ENCODE measurements at regions of chrX and their contacts with region 1.

Region 1: GRCh38 chrX:68710870-68711576 is 63.6 kb downstream of the STARD8 start:
- DNase-seq: peak; percentile 51
- CTCF ChIP-seq: peak; percentile 37

Region 2: GRCh38 chrX:68196939-68197791 is 513.9 kb before region 1 on chrX:
- CTCF ChIA-PET with region 1: interaction called, 24 read pairs
- POLR2A ChIA-PET with region 1: no interaction called
- DNase-seq: peak; percentile 35
- CTCF ChIP-seq: peak; percentile 51

Region 3: DNA sequence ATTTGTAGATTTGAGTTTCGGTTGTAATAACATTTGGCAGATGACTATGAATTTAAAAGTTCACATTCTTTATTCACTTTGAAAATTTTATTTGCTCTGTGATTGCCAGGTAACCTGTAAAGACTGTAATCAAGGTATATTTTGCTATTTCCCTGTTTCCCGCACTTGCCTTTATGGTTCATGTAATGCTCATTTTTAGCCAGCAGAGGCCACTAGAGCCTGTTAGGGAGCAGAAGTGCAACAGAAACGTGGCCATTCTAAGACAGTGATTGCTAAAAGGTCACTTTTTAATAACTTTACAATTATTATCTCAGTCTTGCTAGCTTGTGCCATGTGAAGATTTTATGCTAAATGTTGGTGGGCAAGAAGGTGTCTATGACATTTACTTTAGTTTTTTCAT is 199.8 kb before region 1 on chrX:
- CTCF ChIA-PET with region 1: interaction called, 37 read pairs
- POLR2A ChIA-PET with region 1: no interaction called
- DNase-seq: peak; percentile 48
- CTCF ChIP-seq: peak; percentile 57

Region 4: DNA sequence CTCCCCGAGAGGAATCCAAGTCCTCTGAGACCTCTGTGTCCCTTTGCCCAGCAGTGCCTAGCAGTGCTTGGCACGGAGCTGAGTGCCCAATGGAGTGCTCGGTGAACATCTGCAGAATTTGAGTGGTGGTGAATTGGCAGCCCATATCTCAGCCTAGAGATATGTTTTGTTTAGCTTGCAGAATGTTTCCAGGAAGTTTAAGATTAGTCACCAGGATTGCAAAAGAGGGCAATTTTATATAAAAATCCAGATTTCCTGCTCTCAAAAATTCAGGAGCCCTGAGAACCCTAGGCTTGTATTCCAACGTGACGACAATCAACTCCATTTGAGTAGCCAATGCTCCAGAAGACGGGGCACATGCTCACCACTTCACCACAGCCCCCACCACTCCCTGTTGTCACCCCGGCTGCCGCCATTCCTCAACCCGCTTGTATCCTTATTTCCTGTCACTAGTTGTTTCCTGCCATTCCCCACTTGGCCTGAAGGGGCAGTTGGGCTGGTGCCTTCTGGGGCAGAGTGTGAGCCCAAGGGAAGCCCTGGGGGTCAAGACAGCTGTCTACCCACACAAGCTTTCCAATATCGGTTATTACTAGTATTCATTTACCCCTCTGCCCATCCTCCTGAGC is 234.7 kb after region 1 on chrX:
- CTCF ChIA-PET with region 1: no interaction called
- POLR2A ChIA-PET with region 1: no interaction called
- DNase-seq: peak; percentile 3
- CTCF ChIP-seq: no peak

Measured in GM10248 (cell line).